ENCODE measurements at regions of chr2 and their contacts with region 1.

Region 1: DNA sequence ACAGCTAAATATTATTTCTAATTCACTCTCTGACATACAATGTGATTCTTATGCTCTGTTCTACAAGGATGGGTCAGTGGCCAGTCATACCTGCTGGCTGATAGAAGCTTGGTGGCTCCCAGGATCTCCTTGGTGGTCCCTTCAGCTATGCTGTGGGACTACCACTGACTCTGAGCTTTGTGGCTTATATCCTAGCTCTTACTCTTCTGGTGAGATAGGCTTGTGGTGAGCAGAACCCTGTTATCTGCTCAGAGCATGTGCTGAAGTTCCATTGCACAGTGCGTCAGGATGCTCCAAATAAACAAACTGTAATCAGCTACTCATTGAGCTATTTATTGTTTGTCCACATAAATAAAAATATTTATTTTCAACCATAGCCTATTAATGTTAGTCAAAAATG is 51.7 kb downstream of the MFSD6 start:
- DNase-seq: no peak
- ATAC-seq: peak; percentile 65 to 84 (median 70)
- H3K4me3 ChIP-seq: no peak overlapping the region
- H3K27ac ChIP-seq: no peak overlapping the region
- H3K4me1 ChIP-seq: peaks cover 0 to 25% (median 7%) of the 10 kb centered on the region in 12 donors
- H3K27me3 ChIP-seq: no peaks in the 10 kb centered on the region
- CTCF ChIP-seq: no peak
- POLR2A ChIP-seq: no peak

Region 2: DNA sequence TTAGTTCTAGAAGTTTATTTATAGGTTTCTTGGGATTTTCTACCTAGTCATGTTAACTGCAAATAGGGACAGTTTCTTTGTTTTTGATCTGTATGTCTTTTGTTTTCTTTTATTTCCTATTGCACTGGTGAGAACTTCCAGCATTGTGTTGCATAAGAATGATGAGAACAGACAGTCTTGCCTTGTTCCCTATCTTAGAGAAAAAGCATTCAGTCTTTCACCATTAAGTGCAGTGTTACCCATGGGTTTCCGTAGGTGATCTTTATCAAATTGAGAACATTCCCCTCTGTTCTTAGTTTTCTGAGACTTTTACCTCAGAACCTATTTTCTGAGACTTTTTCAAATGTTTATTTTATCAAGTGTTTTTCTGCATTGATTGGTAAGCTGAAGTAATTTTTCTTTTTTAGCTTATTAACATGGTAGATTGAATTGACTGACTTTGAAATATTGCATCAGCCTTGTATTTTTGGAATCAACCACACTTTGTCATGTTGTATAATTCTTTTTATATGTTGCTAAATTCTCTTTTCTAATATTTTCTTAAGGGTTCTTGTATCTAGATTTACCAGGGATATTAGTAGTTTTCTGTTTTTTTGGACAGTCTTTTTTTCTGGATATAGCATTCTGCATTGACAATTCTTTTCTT is 34.5 kb before region 1 on chr2:
- intact Hi-C with region 1: loop called in 2 of 10 experiments (anchors 5 kb)
- DNase-seq: no peak
- ATAC-seq: no peak
- H3K4me3 ChIP-seq: no peak overlapping the region
- H3K27ac ChIP-seq: no peak overlapping the region
- H3K4me1 ChIP-seq: peaks cover 0 to 13% (median 0%) of the 10 kb centered on the region in 12 donors
- H3K27me3 ChIP-seq: no peaks in the 10 kb centered on the region
- CTCF ChIP-seq: no peak
- POLR2A ChIP-seq: no peak

Measured in heart left ventricle (tissue), 16 donors.